Heart left ventricle (tissue), 16 donors: ENCODE measurements at regions of chr1 and their contacts with region 1.

Region 1: GRCh38 chr1:167066333-167067122 is 23.6 kb downstream of the GPA33 start:
- DNase-seq: peak; percentile 65 to 88 (median 72)
- ATAC-seq: peak; percentile 57 to 93 (median 87)
- H3K4me3 ChIP-seq: peak overlapping the region in 7 of 12 donors; percentile 14 to 41 (median 34)
- H3K27ac ChIP-seq: no peak overlapping the region
- H3K4me1 ChIP-seq: peaks cover 0 to 13% (median 4%) of the 10 kb centered on the region in 12 donors
- H3K27me3 ChIP-seq: peaks cover 0 to 3% (median 0%) of the 10 kb centered on the region in 9 donors
- CTCF ChIP-seq: peak; percentile 90 to 98 (median 97)
- POLR2A ChIP-seq: no peak

Region 2: GRCh38 chr1:167128261-167129227 is 62.0 kb after region 1 on chr1:
- intact Hi-C with region 1: loop called in 1 of 10 experiments (anchors 5 kb)
- DNase-seq: no peak
- ATAC-seq: no peak
- H3K4me3 ChIP-seq: no peak overlapping the region
- H3K27ac ChIP-seq: no peak overlapping the region
- H3K4me1 ChIP-seq: peaks cover 0 to 11% (median 0%) of the 10 kb centered on the region in 12 donors
- H3K27me3 ChIP-seq: peaks cover 0 to 7% (median 0%) of the 10 kb centered on the region in 9 donors
- CTCF ChIP-seq: no peak
- POLR2A ChIP-seq: no peak

Region 3: GRCh38 chr1:167220537-167221125 is 154.1 kb after region 1 on chr1 and contains the start of gene POU2F1:
- intact Hi-C with region 1: loop called in 8 of 10 experiments (anchors 2 to 10 kb)
- DNase-seq: peak; percentile 98 to 100 (median 99)
- ATAC-seq: peak; percentile 94 to 97 (median 95)
- H3K4me3 ChIP-seq: peak within 1 kb of the TSS; percentile 70 to 93 (median 86)
- H3K27ac ChIP-seq: peak within 1 kb of the TSS; percentile 90 to 97 (median 94)
- H3K4me1 ChIP-seq: peaks cover 0 to 34% (median 18%) of the 10 kb centered on the region in 12 donors
- H3K27me3 ChIP-seq: no peaks in the 10 kb centered on the region
- CTCF ChIP-seq: peak; percentile 51 to 87 (median 60)
- POLR2A ChIP-seq: peak; percentile 41 to 71
- total RNA-seq, gene POU2F1: 6.6 to 13.4 (median 9.7) TPM

Region 4: DNA sequence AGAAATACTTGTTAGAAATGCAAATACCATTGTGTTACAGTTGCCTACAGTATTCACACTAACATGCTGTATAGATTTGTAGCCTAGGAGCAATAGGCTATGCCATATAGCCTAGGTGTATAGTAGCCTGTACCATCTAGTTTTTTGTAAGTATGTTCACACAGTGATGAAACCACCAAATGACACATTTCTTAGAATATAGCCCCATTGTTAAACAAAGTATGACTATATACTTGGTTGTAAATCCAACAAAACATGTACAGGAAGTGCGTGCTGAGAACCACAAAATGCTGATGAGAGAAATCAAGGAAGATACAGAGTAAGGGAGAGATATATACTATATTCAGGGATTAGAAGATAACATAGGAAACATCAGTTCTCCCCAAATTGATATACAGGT is 246.3 kb after region 1 on chr1:
- intact Hi-C with region 1: loop called in 1 of 10 experiments (anchors 10 kb)
- DNase-seq: no peak
- ATAC-seq: no peak
- H3K4me3 ChIP-seq: no peak overlapping the region
- H3K27ac ChIP-seq: no peak overlapping the region
- H3K4me1 ChIP-seq: no peaks in the 10 kb centered on the region
- H3K27me3 ChIP-seq: no peaks in the 10 kb centered on the region
- CTCF ChIP-seq: no peak
- POLR2A ChIP-seq: no peak

Region 5: GRCh38 chr1:167533851-167534300 is 467.3 kb after region 1 on chr1:
- intact Hi-C with region 1: loop called (anchors 2 to 10 kb)
- DNase-seq: peak in 4 of 5 donors; percentile 40 to 58 (median 58)
- ATAC-seq: peak; percentile 61 to 89 (median 88)
- H3K4me3 ChIP-seq: no peak overlapping the region
- H3K27ac ChIP-seq: peak overlapping the region in 2 of 12 donors; percentile 11 to 20
- H3K4me1 ChIP-seq: peaks cover 0 to 8% (median under 1%) of the 10 kb centered on the region in 12 donors
- H3K27me3 ChIP-seq: no peaks in the 10 kb centered on the region
- CTCF ChIP-seq: peak; percentile 79 to 95 (median 90)
- POLR2A ChIP-seq: no peak